Activated CD8-positive, alpha-beta T cell treated with anti-CD3 and anti-CD28 coated beads, Interleukin-2, amount 10 ng/mL, durations not matched to agents 7 days and 5 days (primary cell): ENCODE measurements at regions of chr20 and their contacts with region 1.

Region 1: DNA sequence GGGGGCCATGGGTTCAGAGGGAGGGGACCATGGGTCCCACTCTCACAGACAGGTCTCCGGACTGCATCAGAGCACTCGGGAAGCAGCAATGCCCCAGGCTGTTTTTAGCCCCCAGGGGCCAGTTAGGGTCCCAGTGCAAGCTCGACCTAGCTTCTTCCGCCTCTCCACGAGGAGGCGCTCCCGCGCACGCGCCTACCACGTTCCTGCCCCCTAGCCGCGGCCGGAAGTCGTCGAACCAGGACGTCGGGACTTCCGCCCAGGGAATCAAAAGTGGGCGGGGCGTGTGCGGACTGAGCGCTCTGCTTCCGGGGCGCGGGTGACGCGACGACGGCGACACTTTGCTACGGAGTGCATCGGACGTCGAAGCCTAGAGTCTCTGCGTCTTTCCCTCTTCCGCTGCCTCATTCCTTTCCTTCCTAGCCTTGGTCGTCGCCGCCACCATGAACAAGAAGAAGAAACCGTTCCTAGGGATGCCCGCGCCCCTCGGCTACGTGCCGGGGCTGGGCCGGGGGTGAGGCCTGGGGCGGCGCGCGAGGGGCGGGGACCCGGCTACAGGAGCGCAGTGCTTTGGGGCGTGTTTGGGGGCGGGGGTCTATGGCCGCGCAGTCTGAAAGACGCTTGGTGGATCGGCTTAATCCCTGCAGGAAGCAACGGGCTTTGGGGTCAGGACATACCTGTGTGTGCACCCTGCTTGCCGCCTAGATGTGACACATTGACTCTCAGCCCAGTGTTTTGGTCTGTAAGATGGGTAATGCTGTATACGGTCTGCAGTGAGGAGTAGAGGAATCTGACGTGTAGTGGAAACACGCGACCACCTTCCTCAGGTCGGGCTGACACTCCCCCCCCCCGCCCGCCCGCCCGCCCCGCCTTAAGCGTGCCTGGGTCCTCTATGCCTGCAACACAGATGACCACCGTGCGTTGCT is at the start of gene PRPF6:
- DNase-seq: peak; percentile 98
- ATAC-seq: peak; percentile 70
- H3K4me3 Mint-ChIP-seq: peak within 1 kb of the TSS; percentile 87
- H3K27ac Mint-ChIP-seq: peak within 1 kb of the TSS; percentile 95
- H3K4me1 Mint-ChIP-seq: peaks cover 61% of the 10 kb centered on the region
- H3K27me3 Mint-ChIP-seq: no peaks in the 10 kb centered on the region
- total RNA-seq, gene PRPF6: 64.7 to 68.3 TPM

Region 2: GRCh38 chr20:63701730-63702665 is 279.1 kb before region 1 on chr20:
- CTCF ChIA-PET with region 1: no interaction called
- POLR2A ChIA-PET with region 1: no interaction called
- DNase-seq: no peak
- ATAC-seq: no peak
- H3K4me3 Mint-ChIP-seq: no peak overlapping the region
- H3K27ac Mint-ChIP-seq: no peak overlapping the region
- H3K4me1 Mint-ChIP-seq: peaks cover 17% of the 10 kb centered on the region
- H3K27me3 Mint-ChIP-seq: no peaks in the 10 kb centered on the region

Region 3: GRCh38 chr20:64062596-64063388 is 81.7 kb after region 1 on chr20 and contains the start of gene TCEA2:
- CTCF ChIA-PET with region 1: interaction called, 19 read pairs
- POLR2A ChIA-PET with region 1: interaction called, 7 read pairs
- DNase-seq: peak; percentile 97
- ATAC-seq: peak; percentile 82
- H3K4me3 Mint-ChIP-seq: peak within 1 kb of the TSS; percentile 85
- H3K27ac Mint-ChIP-seq: peak within 1 kb of the TSS; percentile 86
- H3K4me1 Mint-ChIP-seq: peaks cover 56% of the 10 kb centered on the region
- H3K27me3 Mint-ChIP-seq: no peaks in the 10 kb centered on the region
- total RNA-seq, gene TCEA2: 49.6 to 55.3 TPM

Region 4: GRCh38 chr20:64119681-64120341 is 138.7 kb after region 1 on chr20:
- CTCF ChIA-PET with region 1: interaction called, 11 read pairs
- POLR2A ChIA-PET with region 1: no interaction called
- DNase-seq: no peak
- ATAC-seq: peak; percentile 39
- H3K4me3 Mint-ChIP-seq: peak overlapping the region; percentile 63
- H3K27ac Mint-ChIP-seq: peak overlapping the region; percentile 87
- H3K4me1 Mint-ChIP-seq: peaks cover 10% of the 10 kb centered on the region
- H3K27me3 Mint-ChIP-seq: peaks cover 14% of the 10 kb centered on the region